Mammary epithelial cell (primary cell): ENCODE measurements at regions of chr12 and their contacts with region 1.

Region 1: GRCh38 chr12:115541891-115542421 is 735.5 kb downstream of the MED13L start:
- DNase-seq: peak; percentile 79
- H3K4me3 ChIP-seq: no peak overlapping the region
- H3K27ac ChIP-seq: no peak overlapping the region
- H3K4me1 ChIP-seq: peaks cover 8% of the 10 kb centered on the region
- H3K27me3 ChIP-seq: no peaks in the 10 kb centered on the region
- CTCF ChIP-seq: no peak

Region 2: DNA sequence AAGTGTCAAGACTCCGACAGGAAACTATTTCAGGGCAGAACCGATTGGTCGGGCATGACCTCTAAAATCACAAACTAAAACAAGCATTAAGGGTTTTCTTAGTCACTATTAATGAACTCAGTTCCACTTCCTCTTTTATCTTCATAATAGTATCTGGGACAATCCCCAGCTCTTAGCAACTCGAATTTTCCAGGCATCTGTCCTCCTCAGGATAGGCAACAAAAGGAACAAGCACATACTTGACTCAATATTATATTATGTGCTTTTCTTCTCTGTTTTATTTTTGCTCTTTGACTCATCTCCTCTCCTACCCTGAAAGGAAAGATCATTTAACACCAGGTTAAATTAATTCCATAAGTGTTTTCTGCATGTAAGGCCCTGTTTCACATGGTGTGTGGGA is 219.7 kb before region 1 on chr12:
- CTCF ChIA-PET with region 1: no interaction called
- dilution Hi-C with region 1: no loop called
- in situ Hi-C with region 1: no loop called
- intact Hi-C with region 1: no loop called
- DNase-seq: peak; percentile 84
- H3K4me3 ChIP-seq: no peak overlapping the region
- H3K27ac ChIP-seq: peak overlapping the region; percentile 62
- H3K4me1 ChIP-seq: peaks cover 16% of the 10 kb centered on the region
- H3K27me3 ChIP-seq: no peaks in the 10 kb centered on the region
- CTCF ChIP-seq: no peak

Region 3: GRCh38 chr12:115485503-115485902 is 56.5 kb before region 1 on chr12:
- CTCF ChIA-PET with region 1: no interaction called
- dilution Hi-C with region 1: no loop called
- in situ Hi-C with region 1: no loop called
- intact Hi-C with region 1: no loop called
- DNase-seq: no peak
- H3K4me3 ChIP-seq: no peak overlapping the region
- H3K27ac ChIP-seq: no peak overlapping the region
- H3K4me1 ChIP-seq: no peaks in the 10 kb centered on the region
- H3K27me3 ChIP-seq: peaks cover 2% of the 10 kb centered on the region
- CTCF ChIP-seq: no peak

Region 4: GRCh38 chr12:115500872-115501271 is 41.1 kb before region 1 on chr12:
- CTCF ChIA-PET with region 1: no interaction called
- dilution Hi-C with region 1: no loop called
- in situ Hi-C with region 1: no loop called
- intact Hi-C with region 1: no loop called
- DNase-seq: no peak
- H3K4me3 ChIP-seq: no peak overlapping the region
- H3K27ac ChIP-seq: no peak overlapping the region
- H3K4me1 ChIP-seq: no peaks in the 10 kb centered on the region
- H3K27me3 ChIP-seq: no peaks in the 10 kb centered on the region
- CTCF ChIP-seq: no peak

Region 5: GRCh38 chr12:115583591-115583990 is 41.6 kb after region 1 on chr12:
- CTCF ChIA-PET with region 1: no interaction called
- dilution Hi-C with region 1: no loop called
- in situ Hi-C with region 1: no loop called
- intact Hi-C with region 1: no loop called
- DNase-seq: no peak
- H3K4me3 ChIP-seq: no peak overlapping the region
- H3K27ac ChIP-seq: no peak overlapping the region
- H3K4me1 ChIP-seq: no peaks in the 10 kb centered on the region
- H3K27me3 ChIP-seq: no peaks in the 10 kb centered on the region
- CTCF ChIP-seq: no peak

Region 6: DNA sequence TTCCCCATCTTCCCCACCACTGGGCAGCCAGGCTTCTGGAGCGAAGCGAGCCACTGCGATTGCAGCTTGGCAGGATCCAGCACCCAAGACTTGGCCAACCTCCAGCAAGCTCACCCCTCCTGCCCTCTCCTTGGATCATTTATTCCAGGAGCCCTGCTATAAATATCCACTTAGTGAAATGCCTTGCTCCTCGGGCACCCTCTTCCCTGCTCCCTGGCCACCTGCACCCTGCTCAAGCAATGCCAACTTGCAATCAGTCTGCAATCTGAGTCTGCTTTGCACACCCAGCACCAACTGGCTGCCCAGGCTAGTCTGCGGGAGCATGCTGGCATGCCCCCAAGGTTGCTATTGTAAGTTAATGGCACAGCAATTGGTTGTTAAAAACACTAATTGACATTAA is 69.5 kb after region 1 on chr12:
- CTCF ChIA-PET with region 1: no interaction called
- dilution Hi-C with region 1: loop called (anchors 5 kb)
- in situ Hi-C with region 1: no loop called
- intact Hi-C with region 1: no loop called
- DNase-seq: no peak
- H3K4me3 ChIP-seq: no peak overlapping the region
- H3K27ac ChIP-seq: no peak overlapping the region
- H3K4me1 ChIP-seq: no peaks in the 10 kb centered on the region
- H3K27me3 ChIP-seq: no peaks in the 10 kb centered on the region
- CTCF ChIP-seq: no peak